H1 (cell line): ENCODE measurements at regions of chr17 and their contacts with region 1.

Region 1: GRCh38 chr17:15502369-15503112 is 35.1 kb upstream of the CDRT4 start:
- DNase-seq: peak; percentile 56 to 92
- H3K4me3 ChIP-seq: peak overlapping the region in 1 of 4 experiments; percentile 33; a peak in 1 of 8 replicates
- H3K27ac ChIP-seq: no peak overlapping the region
- H3K4me1 ChIP-seq: peaks cover 0 to 5% (median 3%) of the 10 kb centered on the region in 4 experiments; a peak in 4 of 7 replicates
- H3K27me3 ChIP-seq: no peaks in the 10 kb centered on the region
- CTCF ChIP-seq: peak; percentile 74 to 90 (median 77)
- EP300 ChIP-seq: no peak
- POLR2A ChIP-seq: no peak
- RAD21 ChIP-seq: peak; percentile 83 to 91

Region 2: GRCh38 chr17:15247891-15248529 is 254.5 kb before region 1 on chr17:
- CTCF ChIA-PET with region 1: interaction called, 18 read pairs
- POLR2A ChIA-PET with region 1: no interaction called
- DNase-seq: no peak
- H3K4me3 ChIP-seq: no peak overlapping the region
- H3K27ac ChIP-seq: no peak overlapping the region
- H3K4me1 ChIP-seq: no peaks in the 10 kb centered on the region
- H3K27me3 ChIP-seq: no peaks in the 10 kb centered on the region; a peak in 1 of 7 replicates
- CTCF ChIP-seq: peak; percentile 33 to 79 (median 56)
- EP300 ChIP-seq: no peak
- POLR2A ChIP-seq: no peak
- RAD21 ChIP-seq: peak; percentile 70 to 80

Region 3: GRCh38 chr17:15424521-15424920 is 78.0 kb before region 1 on chr17:
- CTCF ChIA-PET with region 1: interaction called, 10 read pairs
- POLR2A ChIA-PET with region 1: no interaction called
- DNase-seq: no peak
- H3K4me3 ChIP-seq: no peak overlapping the region
- H3K27ac ChIP-seq: no peak overlapping the region
- H3K4me1 ChIP-seq: no peaks in the 10 kb centered on the region
- H3K27me3 ChIP-seq: no peaks in the 10 kb centered on the region
- CTCF ChIP-seq: no peak
- EP300 ChIP-seq: no peak
- POLR2A ChIP-seq: no peak
- RAD21 ChIP-seq: no peak

Region 4: GRCh38 chr17:15444805-15445204 is 57.7 kb before region 1 on chr17:
- CTCF ChIA-PET with region 1: interaction called, 11 read pairs
- POLR2A ChIA-PET with region 1: no interaction called
- DNase-seq: no peak
- H3K4me3 ChIP-seq: no peak overlapping the region
- H3K27ac ChIP-seq: no peak overlapping the region
- H3K4me1 ChIP-seq: no peaks in the 10 kb centered on the region
- H3K27me3 ChIP-seq: no peaks in the 10 kb centered on the region
- CTCF ChIP-seq: no peak
- EP300 ChIP-seq: no peak
- POLR2A ChIP-seq: no peak
- RAD21 ChIP-seq: no peak

Region 5: GRCh38 chr17:15513058-15513858 is 10.7 kb after region 1 on chr17:
- CTCF ChIA-PET with region 1: interaction called, 16 read pairs
- POLR2A ChIA-PET with region 1: interaction called, 6 read pairs
- DNase-seq: no peak
- H3K4me3 ChIP-seq: no peak overlapping the region
- H3K27ac ChIP-seq: no peak overlapping the region
- H3K4me1 ChIP-seq: no peaks in the 10 kb centered on the region
- H3K27me3 ChIP-seq: no peaks in the 10 kb centered on the region
- CTCF ChIP-seq: no peak
- EP300 ChIP-seq: no peak
- POLR2A ChIP-seq: no peak
- RAD21 ChIP-seq: no peak